ENCODE measurements at regions of chr6 and their contacts with region 1.

Region 1: DNA sequence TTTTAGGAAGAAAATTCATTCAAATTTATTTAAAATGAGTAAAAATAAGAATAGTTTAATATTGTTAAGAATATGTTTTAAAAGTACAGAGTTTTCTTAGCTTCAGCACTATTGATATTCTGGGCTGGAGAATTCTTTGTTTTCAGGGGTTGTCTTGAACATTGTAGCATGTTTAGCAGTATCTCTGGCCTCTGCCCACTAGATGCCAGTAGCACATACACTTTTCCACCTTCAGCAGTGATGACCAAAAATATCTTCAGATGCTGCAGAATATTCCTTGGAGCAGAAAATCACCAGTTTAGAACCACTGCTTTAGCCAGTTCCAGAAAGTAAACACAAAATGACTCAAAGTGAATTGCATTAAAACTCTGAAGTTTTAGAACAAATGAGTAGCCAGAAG is 19.4 kb upstream of the SDHAF4 start:
- DNase-seq: no peak
- H3K4me3 Mint-ChIP-seq: no peak overlapping the region
- H3K27ac Mint-ChIP-seq: no peak overlapping the region
- H3K4me1 Mint-ChIP-seq: no peaks in the 10 kb centered on the region
- H3K27me3 Mint-ChIP-seq: peaks cover 2% of the 10 kb centered on the region

Region 2: DNA sequence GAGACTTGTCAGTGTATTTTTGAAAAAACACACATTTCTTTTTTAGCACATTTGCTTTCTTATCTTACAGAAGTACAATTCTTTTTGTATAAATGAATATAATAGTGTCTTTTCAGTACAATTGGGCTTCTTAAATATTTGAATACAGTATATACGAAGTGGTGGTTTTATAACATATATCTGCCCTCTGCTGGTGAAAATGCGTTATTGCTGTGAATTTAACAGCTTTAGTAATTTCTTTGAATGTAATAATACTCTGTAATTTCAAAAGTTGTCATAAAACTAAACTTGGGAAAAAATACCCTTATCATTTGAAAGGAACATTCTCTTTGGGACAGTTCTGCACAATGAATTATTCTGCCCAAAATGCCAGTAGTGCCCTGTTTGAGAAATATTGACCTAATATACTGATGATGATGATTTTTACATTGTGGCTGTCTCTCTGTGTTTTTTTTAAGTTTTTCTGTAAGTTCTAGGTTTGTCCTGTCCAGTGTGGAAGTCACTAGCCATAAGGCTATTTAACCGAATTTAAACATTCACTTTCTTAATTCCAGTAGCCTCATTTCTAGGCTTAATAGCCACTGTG is 139.3 kb after region 1 on chr6:
- intact Hi-C with region 1: loop called (anchors 1 kb)
- DNase-seq: no peak
- H3K4me3 Mint-ChIP-seq: no peak overlapping the region
- H3K27ac Mint-ChIP-seq: no peak overlapping the region
- H3K4me1 Mint-ChIP-seq: peaks cover 25% of the 10 kb centered on the region
- H3K27me3 Mint-ChIP-seq: no peaks in the 10 kb centered on the region

Measured in activated T-helper 2 cell treated with anti-CD3 and anti-CD28 coated beads, Interferon-gamma antibody, Interleukin-2, Interleukin-4, amounts not matched to agents 10 μg/mL and 5 μg/mL and 100 μg/mL, durations not matched to agents 14 hours and 24 hours and 36 hours (primary cell).